ENCODE measurements at regions of chr3 and their contacts with region 1.

Region 1: GRCh38 chr3:178436773-178437172 is 99.5 kb upstream of the KCNMB2 start:
- DNase-seq: no peak
- H3K4me3 ChIP-seq: no peak overlapping the region
- H3K27ac ChIP-seq: no peak overlapping the region
- H3K27me3 ChIP-seq: no peaks in the 10 kb centered on the region
- CTCF ChIP-seq: peak; percentile 52 to 85 (median 72)

Region 2: DNA sequence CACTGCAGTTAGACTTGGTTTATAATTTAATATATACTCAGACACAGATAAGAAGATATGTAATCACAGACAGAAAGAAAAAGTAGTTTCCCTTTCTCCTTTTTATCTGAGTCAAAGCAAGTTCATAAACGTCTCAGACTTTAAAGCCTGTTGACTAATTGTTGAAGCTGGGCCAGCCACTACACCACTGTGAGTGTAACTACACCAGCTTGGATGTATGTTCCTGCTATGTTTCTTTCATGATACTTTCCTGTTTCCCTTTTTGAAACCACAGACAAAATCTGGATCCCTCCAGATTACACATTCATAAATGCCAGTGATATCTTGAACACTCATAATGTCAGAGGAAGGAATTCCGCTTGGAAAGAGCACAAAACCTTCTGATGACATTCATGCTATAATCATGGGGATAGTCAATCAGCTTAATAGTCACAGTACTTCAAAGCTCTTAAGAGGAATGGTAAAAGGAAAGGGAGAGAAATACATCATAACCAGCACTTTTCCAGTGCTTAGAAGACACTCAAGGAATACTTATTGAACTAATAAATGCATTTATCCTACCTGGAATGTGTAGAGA is 131.5 kb after region 1 on chr3:
- intact Hi-C with region 1: no loop called
- DNase-seq: no peak
- H3K4me3 ChIP-seq: no peak overlapping the region
- H3K27ac ChIP-seq: no peak overlapping the region
- H3K27me3 ChIP-seq: no peaks in the 10 kb centered on the region
- CTCF ChIP-seq: no peak

Region 3: DNA sequence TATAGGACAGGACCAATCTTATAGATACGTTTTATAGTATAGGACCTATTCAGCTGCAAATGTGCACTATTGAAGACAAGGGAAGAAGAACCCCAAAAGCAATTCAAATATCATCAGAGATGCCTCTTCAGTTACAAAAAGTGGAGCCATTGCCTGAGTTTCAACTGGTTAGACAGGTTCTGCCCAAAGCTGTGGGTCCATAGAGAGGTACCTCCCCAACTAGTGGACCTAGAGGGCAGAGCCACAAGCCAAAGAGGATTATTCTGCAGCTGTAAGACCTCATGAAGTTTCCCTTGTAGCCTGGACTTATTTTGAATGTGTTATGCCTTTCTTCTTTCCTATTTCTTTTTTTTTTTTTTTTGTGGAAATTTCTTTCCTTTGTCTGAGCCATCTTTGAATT is 169.4 kb after region 1 on chr3:
- intact Hi-C with region 1: no loop called
- DNase-seq: no peak
- H3K4me3 ChIP-seq: no peak overlapping the region
- H3K27ac ChIP-seq: no peak overlapping the region
- H3K27me3 ChIP-seq: no peaks in the 10 kb centered on the region
- CTCF ChIP-seq: no peak

Region 4: GRCh38 chr3:178966299-178967176 is 529.8 kb after region 1 on chr3:
- intact Hi-C with region 1: loop called (anchors 1 to 10 kb)
- DNase-seq: peak in 2 of 10 donors; percentile 12 to 34
- H3K4me3 ChIP-seq: peak overlapping the region in 23 of 59 donors; percentile 1 to 35 (median 17)
- H3K27ac ChIP-seq: peak overlapping the region in 37 of 59 donors; percentile 0 to 83 (median 51)
- H3K27me3 ChIP-seq: no peaks in the 10 kb centered on the region
- CTCF ChIP-seq: peak; percentile 37 to 81 (median 62)